Tibial artery (tissue), 4 donors: ENCODE measurements at regions of chr20 and their contacts with region 1.

Region 1: GRCh38 chr20:33686100-33686983 is at the start of gene E2F1:
- DNase-seq: peak; percentile 93 to 97
- H3K4me3 ChIP-seq: peak within 1 kb of the TSS; percentile 48
- H3K27ac ChIP-seq: peak within 1 kb of the TSS; percentile 61 to 69
- H3K4me1 ChIP-seq: peaks cover 0 to 26% (median 15%) of the 10 kb centered on the region in 4 donors
- H3K27me3 ChIP-seq: no peaks in the 10 kb centered on the region
- CTCF ChIP-seq: peak; percentile 42 to 51

Region 2: DNA sequence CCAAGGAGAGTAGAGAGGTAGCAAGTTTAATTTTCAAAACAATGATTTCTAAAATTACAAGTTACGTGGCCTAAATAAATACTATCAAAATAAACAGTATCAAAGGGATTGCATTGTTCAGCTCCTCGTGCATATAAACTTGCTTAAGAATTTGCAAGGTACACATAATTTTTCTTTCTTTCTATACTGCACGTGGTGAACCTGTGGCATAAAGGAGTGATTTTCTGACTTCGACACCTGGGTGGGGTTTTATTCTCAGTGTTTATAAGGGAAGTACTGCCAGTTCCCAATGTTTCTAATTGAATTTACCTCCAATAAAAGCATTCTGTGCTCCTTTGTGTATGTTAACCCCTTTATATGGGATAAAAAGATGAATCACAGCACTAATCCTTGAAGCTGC is 74.3 kb before region 1 on chr20:
- intact Hi-C with region 1: no loop called
- DNase-seq: no peak
- H3K4me3 ChIP-seq: no peak overlapping the region
- H3K27ac ChIP-seq: no peak overlapping the region
- H3K4me1 ChIP-seq: no peaks in the 10 kb centered on the region
- H3K27me3 ChIP-seq: no peaks in the 10 kb centered on the region
- CTCF ChIP-seq: no peak

Region 3: GRCh38 chr20:33731693-33732165 is 45.4 kb after region 1 on chr20 and contains the start of gene ZNF341:
- intact Hi-C with region 1: loop called (anchors 10 kb)
- DNase-seq: peak; percentile 76 to 93
- H3K4me3 ChIP-seq: peak within 1 kb of the TSS; percentile 60
- H3K27ac ChIP-seq: peak within 1 kb of the TSS; percentile 91 to 92
- H3K4me1 ChIP-seq: peaks cover 5 to 27% (median 14%) of the 10 kb centered on the region in 4 donors
- H3K27me3 ChIP-seq: no peaks in the 10 kb centered on the region
- CTCF ChIP-seq: peak; percentile 86 to 88